ENCODE measurements at regions of chr20 and their contacts with region 1.

Region 1: GRCh38 chr20:36919715-36920333 is 31.7 kb downstream of the SAMHD1 start:
- DNase-seq: peak; percentile 58 to 66 (median 61)
- H3K4me3 ChIP-seq: no peak overlapping the region
- H3K4me3 Mint-ChIP-seq: no peak overlapping the region
- H3K27ac ChIP-seq: no peak overlapping the region
- H3K27ac Mint-ChIP-seq: peak overlapping the region; percentile 13 to 84 (median 60)
- H3K4me1 ChIP-seq: peaks cover 21% of the 10 kb centered on the region
- H3K4me1 Mint-ChIP-seq: peaks cover 7 to 20% (median 11%) of the 10 kb centered on the region in 4 donors
- H3K27me3 ChIP-seq: no peaks in the 10 kb centered on the region
- H3K27me3 Mint-ChIP-seq: no peaks in the 10 kb centered on the region

Region 2: DNA sequence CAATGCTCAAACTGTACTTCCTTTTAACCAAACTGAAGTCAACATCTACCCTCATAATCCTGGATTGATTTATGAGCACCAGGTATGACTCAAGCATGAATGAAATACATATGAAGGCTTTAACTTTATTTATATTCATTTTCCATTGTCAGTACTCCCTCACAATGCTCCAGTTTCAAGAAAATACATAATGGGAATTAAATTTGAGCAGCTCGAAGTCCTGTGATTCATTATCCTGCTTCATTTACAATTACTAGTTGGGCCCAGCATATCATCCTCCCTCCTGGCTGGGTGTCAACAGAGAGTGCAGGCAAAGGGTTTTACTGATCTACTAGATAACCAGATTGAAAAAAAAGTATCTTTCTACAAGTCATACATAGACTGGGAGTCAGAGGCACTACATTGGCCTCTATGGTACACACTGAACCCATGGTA is 21.6 kb after region 1 on chr20:
- CTCF ChIA-PET with region 1: interaction called, 6 read pairs
- POLR2A ChIA-PET with region 1: interaction called, 9 read pairs
- intact Hi-C with region 1: loop called (anchors 2 kb)
- DNase-seq: no peak
- H3K4me3 ChIP-seq: peak overlapping the region in 1 of 2 donors; percentile 26
- H3K4me3 Mint-ChIP-seq: peak overlapping the region; percentile 67 to 90 (median 72)
- H3K27ac ChIP-seq: peak overlapping the region; percentile 69
- H3K27ac Mint-ChIP-seq: peak overlapping the region; percentile 90 to 100 (median 99)
- H3K4me1 ChIP-seq: peaks cover 96% of the 10 kb centered on the region
- H3K4me1 Mint-ChIP-seq: peaks cover 48 to 84% (median 65%) of the 10 kb centered on the region in 4 donors
- H3K27me3 ChIP-seq: no peaks in the 10 kb centered on the region
- H3K27me3 Mint-ChIP-seq: no peaks in the 10 kb centered on the region